Common myeloid progenitor, CD34-positive (primary cell): ENCODE measurements at regions of chr14 and their contacts with region 1.

Region 1: GRCh38 chr14:58265401-58265800 is 20.8 kb downstream of the PSMA3 start:
- DNase-seq: no peak
- H3K4me3 ChIP-seq: no peak overlapping the region
- H3K27ac ChIP-seq: no peak overlapping the region
- H3K4me1 ChIP-seq: no peaks in the 10 kb centered on the region
- H3K27me3 ChIP-seq: no peaks in the 10 kb centered on the region

Region 2: DNA sequence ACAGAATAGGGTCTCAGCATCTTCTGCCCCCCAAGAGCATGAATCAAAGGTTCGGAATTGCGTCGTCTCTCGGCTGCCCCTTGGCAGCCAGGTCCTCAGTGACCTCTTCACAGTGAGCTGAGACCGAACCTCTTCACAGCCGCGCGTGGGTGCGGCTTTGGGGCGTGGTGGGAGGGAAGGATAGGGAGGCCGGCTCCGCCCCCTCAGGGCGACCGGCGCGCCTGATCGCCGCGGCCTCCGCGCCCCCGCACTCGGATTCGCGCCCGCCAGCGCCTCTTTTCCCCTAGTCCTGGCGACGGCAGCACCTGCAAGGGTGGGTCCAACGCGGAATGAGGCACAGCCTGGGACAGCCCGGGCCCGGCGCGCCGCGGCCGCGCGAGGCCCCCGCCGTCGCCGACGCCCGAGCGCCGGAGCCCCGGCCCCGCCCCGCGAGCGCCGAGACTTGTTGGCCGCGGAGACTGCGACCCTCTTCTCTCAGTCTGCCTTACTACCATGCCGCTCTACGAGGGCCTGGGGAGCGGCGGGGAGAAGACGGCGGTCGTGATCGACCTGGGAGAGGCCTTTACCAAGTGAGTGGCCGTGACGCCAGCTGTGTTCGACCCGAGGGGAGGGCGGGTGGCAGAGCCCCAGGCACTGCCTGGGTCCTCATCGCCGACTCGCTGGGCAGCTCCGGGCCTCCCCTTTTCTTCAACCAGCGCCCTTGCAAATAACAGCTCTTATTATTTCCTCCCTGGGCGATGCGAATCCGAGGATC is 65.5 kb before region 1 on chr14 and contains the start of gene ACTR10:
- CTCF ChIA-PET with region 1: no interaction called
- POLR2A ChIA-PET with region 1: no interaction called
- DNase-seq: peak; percentile 82 to 91 (median 86)
- H3K4me3 ChIP-seq: peak within 1 kb of the TSS; percentile 86 to 99 (median 93)
- H3K27ac ChIP-seq: peak within 1 kb of the TSS; percentile 90 to 94
- H3K4me1 ChIP-seq: peaks cover 4 to 21% (median 18%) of the 10 kb centered on the region in 4 experiments
- H3K27me3 ChIP-seq: peaks cover 0 to 2% (median 0%) of the 10 kb centered on the region in 5 experiments

Region 3: DNA sequence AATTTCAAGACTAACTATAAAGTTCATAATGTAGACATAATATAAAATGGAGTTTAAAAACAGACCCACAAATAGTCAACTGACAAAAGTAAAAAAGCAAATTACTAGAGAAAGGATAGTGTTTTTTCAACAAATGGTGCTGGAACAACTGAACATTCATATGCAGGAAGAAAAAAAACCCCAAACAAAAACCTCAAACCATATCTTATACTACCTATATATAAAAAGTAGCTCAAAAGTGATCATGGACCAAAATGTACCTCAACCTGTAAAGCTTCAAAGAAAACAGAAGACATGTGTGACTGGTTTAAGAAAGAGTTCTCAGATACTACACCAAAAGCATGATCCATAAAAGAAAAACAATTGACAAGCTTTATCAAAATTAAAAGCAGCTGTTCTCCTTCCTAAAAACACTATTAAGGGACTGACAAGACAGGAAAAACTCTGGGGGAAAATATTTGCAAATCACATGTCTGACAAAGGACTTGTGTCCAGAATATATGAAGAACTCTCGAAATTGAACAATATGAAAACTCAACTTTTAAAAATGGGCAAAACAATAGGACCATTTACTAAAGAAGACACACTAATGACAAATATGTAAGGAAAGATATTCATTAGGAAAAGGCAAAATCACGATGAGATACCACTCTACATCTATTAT is 10.3 kb after region 1 on chr14:
- CTCF ChIA-PET with region 1: interaction called, 14 read pairs
- POLR2A ChIA-PET with region 1: no interaction called
- DNase-seq: no peak
- H3K4me3 ChIP-seq: no peak overlapping the region
- H3K27ac ChIP-seq: peak overlapping the region in 1 of 2 experiments; percentile 50
- H3K4me1 ChIP-seq: peaks cover 3 to 30% (median 16%) of the 10 kb centered on the region in 4 experiments
- H3K27me3 ChIP-seq: no peaks in the 10 kb centered on the region

Region 4: GRCh38 chr14:58287607-58288042 is 22.2 kb after region 1 on chr14:
- CTCF ChIA-PET with region 1: no interaction called
- POLR2A ChIA-PET with region 1: no interaction called
- DNase-seq: no peak
- H3K4me3 ChIP-seq: no peak overlapping the region
- H3K27ac ChIP-seq: no peak overlapping the region
- H3K4me1 ChIP-seq: peaks cover 0 to 17% (median 5%) of the 10 kb centered on the region in 4 experiments
- H3K27me3 ChIP-seq: no peaks in the 10 kb centered on the region

Region 5: GRCh38 chr14:58587271-58587670 is 321.9 kb after region 1 on chr14:
- CTCF ChIA-PET with region 1: no interaction called
- POLR2A ChIA-PET with region 1: no interaction called
- DNase-seq: no peak
- H3K4me3 ChIP-seq: no peak overlapping the region
- H3K27ac ChIP-seq: no peak overlapping the region
- H3K4me1 ChIP-seq: no peaks in the 10 kb centered on the region
- H3K27me3 ChIP-seq: no peaks in the 10 kb centered on the region

Region 6: DNA sequence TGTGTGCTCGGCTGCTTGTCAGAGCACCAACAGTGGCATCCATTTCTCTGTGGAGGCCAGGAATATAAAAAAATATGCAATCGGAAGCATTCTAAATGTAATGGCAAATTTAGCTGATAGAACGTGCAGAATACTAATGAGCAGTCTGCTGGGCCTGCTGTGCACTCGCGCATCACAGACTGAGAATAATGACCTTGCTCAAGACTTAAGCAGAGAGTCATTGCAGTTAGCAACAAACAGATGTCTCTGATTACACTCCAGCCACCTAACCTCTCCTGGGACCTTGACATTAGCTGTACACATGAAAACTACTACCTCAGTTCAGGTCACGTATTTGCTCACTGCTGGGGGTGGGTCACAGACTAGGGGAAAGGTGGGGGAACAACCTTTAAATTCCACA is 653.8 kb after region 1 on chr14:
- CTCF ChIA-PET with region 1: no interaction called
- POLR2A ChIA-PET with region 1: no interaction called
- DNase-seq: no peak
- H3K4me3 ChIP-seq: no peak overlapping the region
- H3K27ac ChIP-seq: no peak overlapping the region
- H3K4me1 ChIP-seq: no peaks in the 10 kb centered on the region
- H3K27me3 ChIP-seq: no peaks in the 10 kb centered on the region